ENCODE measurements at regions of chr14 and their contacts with region 1.

Region 1: GRCh38 chr14:24332268-24332993 is 2.4 kb downstream of the ADCY4 start:
- DNase-seq: peak; percentile 79
- H3K4me3 Mint-ChIP-seq: peak overlapping the region; percentile 80
- H3K27ac Mint-ChIP-seq: peak overlapping the region; percentile 27
- H3K4me1 Mint-ChIP-seq: peaks cover 58% of the 10 kb centered on the region
- H3K27me3 Mint-ChIP-seq: peaks cover 29% of the 10 kb centered on the region

Region 2: GRCh38 chr14:24215495-24216344 is 116.7 kb before region 1 on chr14 and contains the start of gene MDP1:
- intact Hi-C with region 1: no loop called
- DNase-seq: peak; percentile 85
- H3K4me3 Mint-ChIP-seq: peak within 1 kb of the TSS; percentile 90
- H3K27ac Mint-ChIP-seq: peak within 1 kb of the TSS; percentile 96
- H3K4me1 Mint-ChIP-seq: peaks cover 43% of the 10 kb centered on the region
- H3K27me3 Mint-ChIP-seq: no peaks in the 10 kb centered on the region
- total RNA-seq, gene MDP1: 11.6 and 12.9 TPM in 2 replicates

Region 3: GRCh38 chr14:24299255-24300195 is 32.9 kb before region 1 on chr14 and contains the starts of genes DHRS1 and NOP9:
- intact Hi-C with region 1: no loop called
- DNase-seq: peak; percentile 90
- H3K4me3 Mint-ChIP-seq: peak within 1 kb of the TSS; percentile 94
- H3K27ac Mint-ChIP-seq: peak within 1 kb of the TSS; percentile 96
- H3K4me1 Mint-ChIP-seq: peaks cover 44% of the 10 kb centered on the region
- H3K27me3 Mint-ChIP-seq: no peaks in the 10 kb centered on the region
- total RNA-seq, gene DHRS1: 7.5 TPM in 2 replicates
- total RNA-seq, gene NOP9: 49.3 and 52.6 TPM in 2 replicates

Region 4: DNA sequence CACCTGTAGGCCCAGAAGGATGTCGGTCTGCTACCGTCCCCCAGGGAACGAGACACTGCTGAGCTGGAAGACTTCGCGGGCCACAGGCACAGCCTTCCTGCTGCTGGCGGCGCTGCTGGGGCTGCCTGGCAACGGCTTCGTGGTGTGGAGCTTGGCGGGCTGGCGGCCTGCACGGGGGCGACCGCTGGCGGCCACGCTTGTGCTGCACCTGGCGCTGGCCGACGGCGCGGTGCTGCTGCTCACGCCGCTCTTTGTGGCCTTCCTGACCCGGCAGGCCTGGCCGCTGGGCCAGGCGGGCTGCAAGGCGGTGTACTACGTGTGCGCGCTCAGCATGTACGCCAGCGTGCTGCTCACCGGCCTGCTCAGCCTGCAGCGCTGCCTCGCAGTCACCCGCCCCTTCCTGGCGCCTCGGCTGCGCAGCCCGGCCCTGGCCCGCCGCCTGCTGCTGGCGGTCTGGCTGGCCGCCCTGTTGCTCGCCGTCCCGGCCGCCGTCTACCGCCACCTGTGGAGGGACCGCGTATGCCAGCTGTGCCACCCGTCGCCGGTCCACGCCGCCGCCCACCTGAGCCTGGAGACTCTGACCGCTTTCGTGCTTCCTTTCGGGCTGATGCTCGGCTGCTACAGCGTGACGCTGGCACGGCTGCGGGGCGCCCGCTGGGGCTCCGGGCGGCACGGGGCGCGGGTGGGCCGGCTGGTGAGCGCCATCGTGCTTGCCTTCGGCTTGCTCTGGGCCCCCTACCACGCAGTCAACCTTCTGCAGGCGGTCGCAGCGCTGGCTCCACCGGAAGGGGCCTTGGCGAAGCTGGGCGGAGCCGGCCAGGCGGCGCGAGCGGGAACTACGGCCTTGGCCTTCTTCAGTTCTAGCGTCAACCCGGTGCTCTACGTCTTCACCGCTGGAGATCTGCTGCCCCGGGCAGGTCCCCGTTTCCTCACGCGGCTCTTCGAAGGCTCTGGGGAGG is 21.5 kb before region 1 on chr14 and contains the start of gene LTB4R:
- intact Hi-C with region 1: loop called (anchors 2 kb)
- DNase-seq: peak; percentile 59
- H3K4me3 Mint-ChIP-seq: peak within 1 kb of the TSS; percentile 85
- H3K27ac Mint-ChIP-seq: peak within 1 kb of the TSS; percentile 84
- H3K4me1 Mint-ChIP-seq: peaks cover 81% of the 10 kb centered on the region
- H3K27me3 Mint-ChIP-seq: peaks cover 1% of the 10 kb centered on the region
- total RNA-seq, gene LTB4R: 10.1 and 11.1 TPM in 2 replicates

Region 5: DNA sequence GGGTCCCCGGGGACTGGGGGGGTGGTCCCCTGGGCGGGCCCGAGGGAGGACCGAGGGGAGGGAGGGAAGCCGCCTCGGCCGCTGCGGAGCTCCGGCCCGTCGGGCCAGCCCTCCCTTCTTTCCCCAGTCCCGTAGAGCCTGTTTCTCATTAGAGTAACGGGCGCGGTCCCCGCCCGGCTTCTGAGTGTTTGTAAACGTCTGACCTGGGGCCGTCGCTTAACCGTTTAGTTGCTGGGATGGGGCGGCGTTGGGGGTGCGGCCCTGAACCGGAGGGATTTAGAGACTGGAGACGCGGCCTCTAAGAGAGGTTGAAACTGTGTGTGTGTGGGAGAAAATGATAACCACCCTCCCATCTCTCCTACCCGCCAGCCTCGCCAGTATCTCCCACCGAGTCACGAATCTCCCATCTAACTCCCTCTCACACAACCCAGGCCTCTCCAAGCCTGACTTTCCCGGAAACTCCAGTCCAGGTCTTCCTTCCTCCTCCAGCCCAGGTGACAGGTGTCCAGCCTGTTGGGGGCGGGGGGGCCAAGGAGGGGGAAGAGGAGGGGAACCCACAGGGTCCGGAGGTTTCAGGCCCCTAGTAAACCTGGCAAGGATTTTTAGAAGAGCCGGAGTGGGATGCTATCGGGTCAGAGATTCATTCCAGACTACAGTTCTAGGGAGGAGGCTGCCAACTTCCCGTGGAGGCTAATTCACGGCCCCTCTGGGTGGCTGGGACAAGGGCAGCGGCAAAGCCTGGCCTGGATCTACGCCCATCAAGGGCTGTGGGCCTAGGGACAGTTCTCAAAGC is 34.5 kb after region 1 on chr14:
- intact Hi-C with region 1: loop called (anchors 2 kb)
- DNase-seq: no peak
- H3K4me3 Mint-ChIP-seq: peak overlapping the region; percentile 37
- H3K27ac Mint-ChIP-seq: no peak overlapping the region
- H3K4me1 Mint-ChIP-seq: peaks cover 23% of the 10 kb centered on the region
- H3K27me3 Mint-ChIP-seq: peaks cover 55% of the 10 kb centered on the region